Naive thymus-derived CD4-positive, alpha-beta T cell (primary cell): ENCODE measurements at regions of chr19 and their contacts with region 1.

Region 1: GRCh38 chr19:55339048-55339888 is at the start of gene KMT5C:
- DNase-seq: peak; percentile 99 to 100 (median 100)
- ATAC-seq: peak; percentile 83
- H3K4me3 ChIP-seq: peak within 1 kb of the TSS; percentile 80
- H3K4me3 Mint-ChIP-seq: peak within 1 kb of the TSS; percentile 87 to 99 (median 96)
- H3K27ac ChIP-seq: peak within 1 kb of the TSS; percentile 93
- H3K27ac Mint-ChIP-seq: peak within 1 kb of the TSS; percentile 88 to 100 (median 97)
- H3K4me1 ChIP-seq: peaks cover 8 to 15% of the 10 kb centered on the region in 2 donors
- H3K4me1 Mint-ChIP-seq: peaks cover 5 to 28% (median 24%) of the 10 kb centered on the region in 7 donors
- H3K27me3 ChIP-seq: no peaks in the 10 kb centered on the region
- H3K27me3 Mint-ChIP-seq: peaks cover 0 to 16% (median 0%) of the 10 kb centered on the region in 5 donors
- total RNA-seq, gene KMT5C: 21.8 to 63.3 (median 27.2) TPM

Region 2: DNA sequence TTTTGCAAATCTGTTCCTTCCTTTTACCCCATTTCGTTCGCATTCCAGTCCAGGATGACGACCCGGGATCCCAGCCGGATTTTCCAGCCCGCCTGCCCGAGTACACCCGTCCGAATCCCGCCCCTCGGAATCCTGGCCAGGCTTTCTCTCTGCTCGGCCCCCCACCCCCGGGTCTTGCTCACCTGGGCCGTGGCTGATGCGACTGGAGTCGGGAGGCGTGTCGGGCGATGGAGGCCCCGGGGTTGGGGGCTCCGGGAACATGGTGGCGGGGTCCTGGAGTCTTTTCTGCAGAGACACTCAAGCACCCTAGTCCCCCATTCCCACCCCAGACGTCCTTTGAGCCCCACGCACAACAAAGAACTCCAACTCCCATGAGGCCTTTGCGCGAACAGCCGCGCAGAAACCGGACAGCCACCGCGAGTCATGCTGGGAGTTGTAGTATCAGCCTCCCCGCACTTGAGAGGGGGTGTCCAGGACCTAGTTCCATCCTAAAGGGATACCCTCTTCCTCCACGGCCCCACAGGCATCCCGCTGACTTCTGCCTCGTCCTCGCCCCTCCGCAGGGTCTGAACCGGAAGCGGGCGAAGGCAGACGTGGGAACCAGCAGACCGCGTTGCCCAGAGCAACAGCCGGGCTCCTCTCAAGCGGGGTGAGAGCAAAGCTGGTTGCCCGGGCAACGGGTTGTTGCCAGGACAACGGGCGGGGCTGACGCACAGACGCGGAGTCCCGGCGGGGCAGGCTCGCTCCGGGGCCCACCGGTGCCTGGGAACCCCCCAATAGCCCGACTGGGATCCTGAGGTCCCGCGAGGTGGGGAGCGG is 160.3 kb before region 1 on chr19:
- CTCF ChIA-PET with region 1: no interaction called
- POLR2A ChIA-PET with region 1: no interaction called
- intact Hi-C with region 1: loop called (anchors 1 to 2 kb)
- DNase-seq: peak; percentile 87 to 98 (median 92)
- ATAC-seq: peak; percentile 93
- H3K4me3 ChIP-seq: peak overlapping the region; percentile 64
- H3K4me3 Mint-ChIP-seq: peak overlapping the region; percentile 49 to 85 (median 82)
- H3K27ac ChIP-seq: peak overlapping the region; percentile 41
- H3K27ac Mint-ChIP-seq: peak overlapping the region; percentile 38 to 94 (median 86)
- H3K4me1 ChIP-seq: peaks cover 15 to 32% of the 10 kb centered on the region in 2 donors
- H3K4me1 Mint-ChIP-seq: peaks cover 9 to 36% (median 26%) of the 10 kb centered on the region in 7 donors
- H3K27me3 ChIP-seq: peaks cover 13 to 50% of the 10 kb centered on the region in 2 donors
- H3K27me3 Mint-ChIP-seq: peaks cover 63 to 79% (median 67%) of the 10 kb centered on the region in 5 donors

Region 3: DNA sequence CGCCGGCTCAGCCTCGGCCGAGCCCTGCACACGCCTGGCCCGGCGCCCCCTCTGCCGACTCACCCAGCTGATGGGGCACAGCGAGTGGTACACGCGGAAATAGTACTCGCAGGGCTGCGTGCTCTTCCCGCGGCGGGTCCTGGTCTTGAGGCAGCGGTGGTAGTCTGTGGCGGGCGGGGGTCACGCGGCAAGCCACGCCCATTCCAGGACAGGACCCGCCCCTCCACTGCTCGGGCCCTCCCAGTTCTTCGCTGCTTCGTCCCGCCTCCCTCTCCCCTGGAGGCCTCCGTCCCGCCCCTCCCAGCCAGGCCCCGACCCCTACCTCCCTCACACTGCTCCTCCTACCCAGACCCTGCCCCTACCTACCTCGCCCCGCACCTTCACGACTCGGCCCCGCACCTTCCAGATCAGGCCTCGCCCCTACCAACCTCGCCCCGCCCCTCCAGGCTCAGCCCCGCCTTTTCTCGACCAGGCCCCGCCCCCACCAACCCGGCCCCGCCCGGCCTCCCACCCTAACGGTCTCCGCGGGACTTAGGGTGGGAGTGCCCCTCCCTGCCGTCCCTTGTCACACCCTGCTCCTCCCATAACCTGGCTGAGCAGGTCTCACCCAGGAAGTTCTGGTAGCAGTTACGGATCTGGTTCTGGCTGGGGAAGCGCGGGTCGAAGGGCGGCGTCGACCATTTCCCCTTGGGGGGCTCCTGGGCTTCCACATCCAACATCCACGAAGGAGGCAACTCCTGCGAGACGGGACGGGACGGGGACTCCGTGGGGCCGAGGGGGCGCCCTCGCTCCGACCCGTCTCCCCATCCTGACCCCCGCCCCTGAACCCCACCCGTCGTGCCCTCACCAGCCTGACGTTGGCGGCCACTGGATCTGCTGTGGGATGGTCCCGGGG is 14.8 kb after region 1 on chr19:
- CTCF ChIA-PET with region 1: no interaction called
- POLR2A ChIA-PET with region 1: interaction called, 4 read pairs
- intact Hi-C with region 1: loop called (anchors 1 kb)
- DNase-seq: peak in 8 of 9 donors; percentile 44 to 70 (median 58)
- ATAC-seq: peak; percentile 90
- H3K4me3 ChIP-seq: peak overlapping the region; percentile 48
- H3K4me3 Mint-ChIP-seq: peak overlapping the region; percentile 66 to 86 (median 80)
- H3K27ac ChIP-seq: no peak overlapping the region
- H3K27ac Mint-ChIP-seq: peak overlapping the region in 2 of 9 donors; percentile 18 to 56
- H3K4me1 ChIP-seq: peaks cover 7 to 10% of the 10 kb centered on the region in 2 donors
- H3K4me1 Mint-ChIP-seq: peaks cover 14 to 25% (median 17%) of the 10 kb centered on the region in 7 donors
- H3K27me3 ChIP-seq: peaks cover 0 to 10% of the 10 kb centered on the region in 2 donors
- H3K27me3 Mint-ChIP-seq: peaks cover 25 to 55% (median 30%) of the 10 kb centered on the region in 5 donors

Region 4: GRCh38 chr19:55437410-55438075 is 98.3 kb after region 1 on chr19:
- CTCF ChIA-PET with region 1: no interaction called
- POLR2A ChIA-PET with region 1: no interaction called
- intact Hi-C with region 1: no loop called
- DNase-seq: peak in 1 of 9 donors; percentile 48
- ATAC-seq: peak; percentile 47
- H3K4me3 ChIP-seq: no peak overlapping the region
- H3K4me3 Mint-ChIP-seq: no peak overlapping the region
- H3K27ac ChIP-seq: no peak overlapping the region
- H3K27ac Mint-ChIP-seq: no peak overlapping the region
- H3K4me1 ChIP-seq: peaks cover 7 to 23% of the 10 kb centered on the region in 2 donors
- H3K4me1 Mint-ChIP-seq: peaks cover 9 to 22% (median 19%) of the 10 kb centered on the region in 7 donors
- H3K27me3 ChIP-seq: peaks cover 8 to 33% of the 10 kb centered on the region in 2 donors
- H3K27me3 Mint-ChIP-seq: peaks cover 41 to 50% (median 44%) of the 10 kb centered on the region in 5 donors

Region 5: GRCh38 chr19:55461259-55461973 is 122.1 kb after region 1 on chr19 and contains the start of gene ISOC2:
- CTCF ChIA-PET with region 1: no interaction called
- POLR2A ChIA-PET with region 1: interaction called, 9 read pairs
- intact Hi-C with region 1: loop called in 1 of 2 experiments (anchors 1 kb)
- DNase-seq: peak; percentile 99 to 100 (median 100)
- ATAC-seq: peak; percentile 98
- H3K4me3 ChIP-seq: peak within 1 kb of the TSS; percentile 91
- H3K4me3 Mint-ChIP-seq: peak within 1 kb of the TSS; percentile 86 to 99 (median 92)
- H3K27ac ChIP-seq: peak within 1 kb of the TSS; percentile 79
- H3K27ac Mint-ChIP-seq: peak within 1 kb of the TSS; percentile 68 to 94 (median 90)
- H3K4me1 ChIP-seq: peaks cover 4 to 12% of the 10 kb centered on the region in 2 donors
- H3K4me1 Mint-ChIP-seq: peaks cover 14 to 33% (median 20%) of the 10 kb centered on the region in 7 donors
- H3K27me3 ChIP-seq: no peaks in the 10 kb centered on the region
- H3K27me3 Mint-ChIP-seq: peaks cover 0 to 2% (median 0%) of the 10 kb centered on the region in 5 donors
- total RNA-seq, gene ISOC2: 5.1 to 20.1 (median 11.3) TPM

Region 6: DNA sequence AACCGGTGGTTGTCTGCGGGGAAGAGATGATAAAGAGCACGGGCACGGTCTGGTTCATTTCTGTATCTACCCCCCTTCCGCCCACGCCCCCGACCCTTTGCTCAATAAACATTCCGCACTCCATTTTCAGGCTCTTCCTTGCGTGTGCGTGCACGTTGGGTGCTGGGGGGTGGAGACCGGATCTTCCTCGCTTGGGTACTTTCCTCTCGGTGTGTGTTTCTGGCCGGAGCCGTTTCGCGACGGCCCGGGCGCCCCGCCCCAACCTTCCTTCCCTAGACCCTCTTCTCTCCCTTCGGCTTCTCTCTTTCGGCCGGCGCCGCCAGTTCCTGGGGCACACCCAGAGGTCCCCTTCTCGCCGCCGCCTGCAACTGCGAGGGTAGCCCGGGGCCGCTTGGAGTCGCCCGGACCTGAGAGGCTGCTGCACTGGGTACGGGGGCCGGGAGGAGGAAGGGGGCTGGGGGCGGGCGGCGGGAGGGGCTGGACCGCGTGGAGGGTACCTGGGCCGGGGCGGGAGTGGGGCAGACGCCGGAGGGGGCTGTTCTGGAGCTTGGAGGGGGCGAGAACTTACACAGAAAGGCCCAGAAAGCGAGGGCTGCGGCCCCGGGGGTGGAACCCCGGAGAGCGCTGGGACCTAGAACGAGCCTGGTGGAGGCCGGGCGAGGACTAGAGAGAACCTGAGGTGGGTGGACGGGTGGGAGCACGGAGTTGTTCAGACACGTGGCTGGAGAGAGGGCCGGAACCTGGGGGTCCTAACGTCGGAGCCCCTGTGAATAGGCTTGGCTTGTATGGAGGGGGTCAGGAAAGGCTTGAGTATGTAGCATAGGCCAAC is 304.3 kb after region 1 on chr19 and contains the start of gene ZNF581:
- CTCF ChIA-PET with region 1: no interaction called
- POLR2A ChIA-PET with region 1: no interaction called
- intact Hi-C with region 1: loop called in 1 of 2 experiments (anchors 5 kb)
- DNase-seq: peak; percentile 63 to 85 (median 81)
- ATAC-seq: peak; percentile 73
- H3K4me3 ChIP-seq: peak within 1 kb of the TSS; percentile 80
- H3K4me3 Mint-ChIP-seq: peak within 1 kb of the TSS; percentile 87 to 97 (median 94)
- H3K27ac ChIP-seq: peak within 1 kb of the TSS; percentile 80
- H3K27ac Mint-ChIP-seq: peak within 1 kb of the TSS; percentile 91 to 98 (median 96)
- H3K4me1 ChIP-seq: peaks cover 24 to 25% of the 10 kb centered on the region in 2 donors
- H3K4me1 Mint-ChIP-seq: peaks cover 23 to 63% (median 54%) of the 10 kb centered on the region in 7 donors
- H3K27me3 ChIP-seq: no peaks in the 10 kb centered on the region
- H3K27me3 Mint-ChIP-seq: no peaks in the 10 kb centered on the region
- total RNA-seq, gene ZNF581: 27.0 to 35.8 (median 32.1) TPM